Activated CD8-positive, alpha-beta memory T cell treated with anti-CD3 and anti-CD28 coated beads, Interleukin-2, amount 10 ng/mL, durations not matched to agents 7 days and 5 days (primary cell): ENCODE measurements at regions of chr3 and their contacts with region 1.

Region 1: DNA sequence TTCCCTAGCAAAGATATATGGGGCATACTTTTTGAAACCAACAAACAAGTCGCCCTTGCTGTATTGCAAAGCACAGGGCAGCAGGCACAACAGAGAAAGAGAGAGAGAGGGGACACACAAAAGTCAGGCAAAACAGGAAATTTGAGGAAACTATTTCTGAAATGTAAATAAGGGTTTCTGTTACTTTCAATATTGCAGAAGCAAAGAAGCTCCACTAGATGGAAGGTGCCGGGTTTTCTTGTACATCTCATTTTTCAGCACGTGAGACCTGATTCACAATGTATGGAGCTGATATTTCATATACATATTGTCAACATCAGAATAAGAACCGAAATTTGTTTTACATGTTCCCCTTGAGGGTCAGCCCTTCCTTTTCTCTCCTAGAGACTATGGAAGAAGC is 127.4 kb downstream of the FOXP1 start:
- DNase-seq: no peak
- ATAC-seq: peak; percentile 38
- H3K4me3 Mint-ChIP-seq: peak overlapping the region; percentile 53
- H3K27ac Mint-ChIP-seq: peak overlapping the region; percentile 87
- H3K4me1 Mint-ChIP-seq: peaks cover 63% of the 10 kb centered on the region
- H3K27me3 Mint-ChIP-seq: no peaks in the 10 kb centered on the region

Region 2: GRCh38 chr3:71416876-71417275 is 39.3 kb before region 1 on chr3:
- CTCF ChIA-PET with region 1: interaction called, 10 read pairs
- DNase-seq: peak; percentile 48
- ATAC-seq: peak; percentile 24
- H3K4me3 Mint-ChIP-seq: no peak overlapping the region
- H3K27ac Mint-ChIP-seq: no peak overlapping the region
- H3K4me1 Mint-ChIP-seq: peaks cover 43% of the 10 kb centered on the region
- H3K27me3 Mint-ChIP-seq: peaks cover 8% of the 10 kb centered on the region

Region 3: GRCh38 chr3:71444028-71444860 is 11.9 kb before region 1 on chr3:
- CTCF ChIA-PET with region 1: interaction called, 14 read pairs
- DNase-seq: peak; percentile 85
- ATAC-seq: peak; percentile 85
- H3K4me3 Mint-ChIP-seq: peak overlapping the region; percentile 61
- H3K27ac Mint-ChIP-seq: peak overlapping the region; percentile 96
- H3K4me1 Mint-ChIP-seq: peaks cover 80% of the 10 kb centered on the region
- H3K27me3 Mint-ChIP-seq: no peaks in the 10 kb centered on the region